Activated naive CD4-positive, alpha-beta T cell treated with anti-CD3 and anti-CD28 coated beads for 36 hours (primary cell): ENCODE measurements at regions of chr11 and their contacts with region 1.

Region 1: DNA sequence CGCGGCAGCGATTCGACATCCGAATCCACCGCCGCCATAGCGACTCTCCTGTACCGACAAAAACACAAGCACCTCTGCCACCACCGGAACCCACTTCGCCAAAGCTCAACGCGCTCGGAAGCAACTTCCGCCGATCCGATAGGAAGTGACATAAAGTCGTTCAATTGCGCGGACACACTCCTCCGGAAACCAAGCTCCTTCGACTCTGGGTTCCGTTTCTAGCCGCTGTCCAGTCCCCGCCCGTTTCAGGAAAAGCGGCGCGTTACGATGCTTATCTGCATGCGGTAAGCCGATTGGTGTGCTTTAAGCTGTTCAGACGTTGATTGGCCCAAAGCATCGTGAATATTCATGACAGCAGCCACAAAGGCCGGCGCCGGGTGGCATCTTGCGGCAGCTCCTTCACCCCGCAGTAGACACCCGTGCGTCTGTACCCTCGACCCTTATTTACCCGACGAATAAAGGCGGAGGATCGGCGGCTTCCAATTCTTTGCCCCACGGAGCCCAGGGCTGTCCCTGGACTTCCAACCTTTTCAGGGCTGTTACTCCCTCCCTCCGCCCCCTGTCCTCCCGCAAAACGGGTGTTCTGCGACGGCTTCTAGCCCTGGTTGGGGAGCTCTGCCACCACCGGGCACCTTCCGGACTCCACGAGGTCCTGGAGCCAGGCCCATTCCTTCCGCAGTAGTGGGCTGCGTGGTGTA is at the start of gene TUT1:
- DNase-seq: peak; percentile 98
- H3K4me3 Mint-ChIP-seq: peak within 1 kb of the TSS; percentile 94
- H3K27ac Mint-ChIP-seq: peak within 1 kb of the TSS; percentile 94
- H3K4me1 Mint-ChIP-seq: peaks cover 55% of the 10 kb centered on the region
- H3K27me3 Mint-ChIP-seq: no peaks in the 10 kb centered on the region
- total RNA-seq, gene TUT1: 38.2 to 42.0 TPM

Region 2: DNA sequence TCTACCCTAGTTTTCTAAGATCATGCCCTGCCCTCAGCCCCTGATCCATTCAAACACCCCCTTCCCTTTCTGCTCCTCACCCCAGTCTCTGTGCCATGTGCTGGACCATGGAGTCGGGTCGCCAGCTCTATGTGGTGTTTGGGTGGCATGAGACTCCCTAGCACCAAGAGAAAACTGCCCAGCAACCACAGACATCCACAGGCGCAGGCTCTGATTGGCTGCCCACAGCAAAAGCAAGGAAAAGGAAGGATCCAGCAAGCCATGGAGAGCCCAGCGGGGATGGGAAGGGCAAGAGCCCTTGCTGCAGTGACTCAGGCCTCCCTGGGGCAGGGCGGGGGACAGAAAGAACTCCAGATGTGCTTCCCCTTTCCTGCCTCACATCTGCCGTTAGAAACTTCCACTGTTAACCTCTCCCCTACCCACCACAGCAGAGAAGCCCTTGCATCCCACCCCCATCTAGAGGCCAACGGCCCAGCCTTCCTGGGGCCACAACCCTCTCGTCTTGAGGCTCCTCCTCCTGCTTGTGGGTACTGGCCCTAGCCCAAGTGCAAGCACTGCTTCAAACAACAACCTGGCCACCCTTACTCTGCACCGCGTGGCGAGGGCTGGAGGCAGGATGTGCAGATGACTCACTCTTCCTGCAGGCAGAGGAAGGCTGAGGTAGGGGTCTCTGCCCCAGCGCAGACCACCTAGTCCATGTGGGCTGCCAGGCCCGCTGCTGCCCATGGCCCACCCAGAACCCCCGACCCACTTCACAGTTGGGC is 35.3 kb before region 1 on chr11:
- CTCF ChIA-PET with region 1: interaction called, 9 read pairs
- intact Hi-C with region 1: loop called (anchors 1 kb)
- DNase-seq: peak; percentile 93
- H3K4me3 Mint-ChIP-seq: peak overlapping the region; percentile 41
- H3K27ac Mint-ChIP-seq: peak overlapping the region; percentile 96
- H3K4me1 Mint-ChIP-seq: peaks cover 95% of the 10 kb centered on the region
- H3K27me3 Mint-ChIP-seq: no peaks in the 10 kb centered on the region

Region 3: DNA sequence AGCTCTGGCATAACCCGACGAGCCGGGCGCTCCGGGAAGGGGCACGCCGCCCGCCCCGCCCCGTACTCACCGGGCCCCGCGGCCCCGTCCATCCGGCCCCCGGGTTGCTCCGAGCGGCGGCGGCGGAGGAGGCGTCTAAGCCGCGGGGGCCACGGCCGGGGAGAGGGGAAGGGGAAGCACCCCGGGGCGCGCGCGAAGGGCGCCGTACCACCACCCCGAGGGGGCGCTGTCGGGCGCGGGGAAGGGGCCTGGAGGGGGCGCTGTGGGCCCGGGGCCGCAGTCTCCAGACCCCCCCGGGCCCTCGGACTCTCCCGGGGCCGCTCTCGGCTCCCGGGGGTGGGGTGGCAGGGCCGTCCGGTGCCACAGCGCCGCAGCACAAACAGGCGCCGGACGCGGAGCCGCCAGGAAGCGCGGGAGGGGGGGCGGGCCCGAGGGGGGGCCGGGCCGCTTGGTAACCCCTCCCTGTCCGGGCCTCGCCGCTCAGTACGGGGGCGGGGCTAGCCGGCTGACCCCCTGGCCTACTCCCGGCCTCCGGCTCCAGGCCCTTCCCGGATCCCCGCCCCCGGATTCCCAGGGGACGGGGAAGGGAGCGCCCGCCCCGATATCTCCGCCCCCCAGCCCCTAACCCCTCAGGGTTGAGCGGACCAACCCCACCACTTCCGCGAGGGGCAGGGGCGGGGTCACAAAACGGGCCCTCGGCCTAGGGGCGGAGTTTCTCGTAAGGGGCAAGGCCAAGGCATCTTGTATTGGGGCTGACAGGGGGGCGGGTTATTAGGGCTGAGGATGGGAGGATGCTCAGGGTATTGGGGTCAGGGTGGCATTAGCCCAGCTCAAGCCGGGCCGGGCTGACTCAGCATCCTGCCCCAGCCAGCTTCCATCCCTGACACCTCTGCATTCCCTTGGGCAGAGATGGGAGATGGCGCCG is 21.0 kb after region 1 on chr11 and contains the starts of genes EML3 and ROM1:
- CTCF ChIA-PET with region 1: interaction called, 28 read pairs
- intact Hi-C with region 1: no loop called
- DNase-seq: peak; percentile 84
- H3K4me3 Mint-ChIP-seq: peak within 1 kb of the TSS; percentile 99
- H3K27ac Mint-ChIP-seq: peak within 1 kb of the TSS; percentile 98
- H3K4me1 Mint-ChIP-seq: peaks cover 54% of the 10 kb centered on the region
- H3K27me3 Mint-ChIP-seq: no peaks in the 10 kb centered on the region
- total RNA-seq, gene EML3: 81.8 to 97.1 TPM
- total RNA-seq, gene ROM1: 0.52 to 1.0 TPM

Region 4: DNA sequence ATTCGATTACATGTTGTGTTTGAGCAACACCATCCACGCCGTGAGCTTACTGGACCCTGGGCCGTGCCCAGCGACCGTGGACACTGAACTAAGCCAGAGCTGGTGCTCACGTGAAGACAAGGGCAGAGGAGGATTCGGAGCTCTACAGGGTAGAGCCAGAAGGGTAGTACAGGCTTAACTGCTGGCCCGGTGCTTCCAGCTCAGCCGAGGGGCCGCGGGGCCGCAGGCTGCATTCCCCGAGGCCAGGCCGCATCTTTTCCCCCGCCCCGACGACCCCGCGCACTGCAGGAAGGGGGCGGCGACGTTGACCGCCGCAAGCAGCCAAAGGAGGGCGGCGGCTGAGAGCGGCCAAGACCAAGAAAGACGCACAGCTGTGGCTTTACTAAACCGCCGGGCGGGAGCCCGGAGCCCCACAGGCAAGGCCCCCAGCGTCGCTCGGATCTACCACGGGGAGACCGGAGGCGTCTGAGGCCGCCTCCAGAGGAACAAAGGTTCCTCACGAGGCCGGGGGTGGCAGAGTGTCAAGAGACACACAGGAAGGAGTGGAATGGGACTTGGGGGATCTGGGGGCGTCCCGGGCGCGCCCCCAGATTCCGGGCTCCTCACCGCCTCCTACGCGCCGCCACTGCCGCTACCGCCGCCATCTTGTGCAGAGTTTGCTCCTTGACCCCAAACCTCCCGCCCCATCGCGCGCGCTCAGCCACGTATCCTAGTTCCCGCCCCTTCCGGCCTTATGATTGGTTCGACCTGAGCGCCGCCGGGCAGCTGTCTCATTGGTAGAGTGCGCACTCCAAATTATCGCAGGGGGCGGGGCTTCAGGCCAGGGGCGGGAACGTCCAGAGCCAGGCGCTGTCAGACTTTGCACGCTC is 54.6 kb after region 1 on chr11 and contains the start of gene GANAB:
- CTCF ChIA-PET with region 1: interaction called, 3 read pairs
- intact Hi-C with region 1: loop called (anchors 1 kb)
- DNase-seq: peak; percentile 100
- H3K4me3 Mint-ChIP-seq: peak within 1 kb of the TSS; percentile 99
- H3K27ac Mint-ChIP-seq: peak within 1 kb of the TSS; percentile 95
- H3K4me1 Mint-ChIP-seq: peaks cover 35% of the 10 kb centered on the region
- H3K27me3 Mint-ChIP-seq: no peaks in the 10 kb centered on the region
- total RNA-seq, gene GANAB: 221 to 230 TPM

Region 5: DNA sequence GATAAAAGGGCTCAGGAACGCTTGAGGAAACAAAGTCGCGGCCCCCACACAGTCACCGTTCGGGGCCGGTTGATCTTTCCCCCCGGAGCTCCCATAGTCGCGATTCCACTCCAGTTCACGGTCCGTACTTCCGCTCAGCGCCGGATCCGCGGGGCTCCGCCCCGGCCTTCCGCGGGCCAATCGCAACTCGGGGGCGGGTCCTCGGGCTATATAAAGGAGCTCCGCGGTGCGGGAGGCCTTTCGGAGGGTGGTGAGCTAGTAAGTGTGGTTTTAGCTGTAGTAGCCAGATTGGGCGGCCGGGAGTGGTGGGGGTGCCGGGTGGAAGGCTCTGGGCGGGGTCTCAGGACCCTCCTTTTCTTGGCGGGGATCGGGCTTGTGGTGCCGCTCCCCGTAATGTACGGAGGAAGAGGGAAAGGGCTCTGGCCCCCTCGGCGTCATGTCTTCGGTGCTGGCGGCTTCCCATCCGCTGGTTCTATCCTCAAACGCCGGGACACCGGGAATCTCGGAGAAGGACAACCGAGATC is 73.5 kb after region 1 on chr11 and contains the starts of genes C11orf98 and CSKMT:
- CTCF ChIA-PET with region 1: interaction called, 10 read pairs
- intact Hi-C with region 1: loop called (anchors 1 kb)
- DNase-seq: peak; percentile 96
- H3K4me3 Mint-ChIP-seq: peak within 1 kb of the TSS; percentile 98
- H3K27ac Mint-ChIP-seq: peak within 1 kb of the TSS; percentile 88
- H3K4me1 Mint-ChIP-seq: peaks cover 42% of the 10 kb centered on the region
- H3K27me3 Mint-ChIP-seq: no peaks in the 10 kb centered on the region
- total RNA-seq, gene C11orf98: 73.5 to 76.5 TPM
- total RNA-seq, gene CSKMT: 35.2 to 44.0 TPM

Region 6: DNA sequence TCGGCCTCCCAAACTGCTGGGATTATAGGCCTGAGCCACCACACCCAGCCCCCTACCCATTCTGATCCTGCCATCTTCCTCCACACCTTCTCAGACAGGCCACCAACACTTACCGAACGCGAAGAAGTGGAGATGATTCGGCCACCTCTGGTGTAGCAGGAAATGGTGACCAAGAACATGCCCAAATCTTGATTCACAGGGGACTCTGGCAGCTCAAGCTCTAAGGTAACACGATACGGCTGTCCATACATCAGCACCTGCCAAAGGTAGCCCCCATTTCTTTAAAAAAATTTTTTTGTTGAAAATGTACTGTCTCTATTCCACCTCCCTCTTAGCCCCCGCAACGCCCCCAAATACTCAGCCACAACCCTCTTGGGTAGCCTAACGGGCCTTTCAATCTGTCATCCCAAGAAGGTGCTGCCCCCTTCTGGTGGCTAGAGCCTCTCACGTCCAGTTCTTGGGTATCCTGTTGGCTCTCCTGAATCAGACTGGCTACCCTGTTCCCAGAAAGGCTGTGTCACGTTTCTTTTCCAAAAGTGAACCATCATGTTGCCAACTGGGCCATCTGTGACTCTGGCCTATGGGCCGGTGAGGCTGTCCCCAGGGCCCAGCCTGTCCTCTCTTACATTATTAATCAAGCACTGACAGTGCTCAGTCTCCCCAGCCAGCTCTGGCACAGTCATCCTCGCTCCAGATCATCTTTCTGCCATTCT is 103.0 kb after region 1 on chr11:
- CTCF ChIA-PET with region 1: interaction called, 18 read pairs
- intact Hi-C with region 1: loop called (anchors 1 kb)
- DNase-seq: peak; percentile 85
- H3K4me3 Mint-ChIP-seq: no peak overlapping the region
- H3K27ac Mint-ChIP-seq: peak overlapping the region; percentile 4
- H3K4me1 Mint-ChIP-seq: no peaks in the 10 kb centered on the region
- H3K27me3 Mint-ChIP-seq: no peaks in the 10 kb centered on the region

Region 7: GRCh38 chr11:62771144-62772021 is 179.8 kb after region 1 on chr11 and contains the start of gene TAF6L:
- CTCF ChIA-PET with region 1: no interaction called
- intact Hi-C with region 1: loop called (anchors 2 kb)
- DNase-seq: peak; percentile 95
- H3K4me3 Mint-ChIP-seq: peak within 1 kb of the TSS; percentile 80
- H3K27ac Mint-ChIP-seq: peak within 1 kb of the TSS; percentile 91
- H3K4me1 Mint-ChIP-seq: peaks cover 25% of the 10 kb centered on the region
- H3K27me3 Mint-ChIP-seq: no peaks in the 10 kb centered on the region
- total RNA-seq, gene TAF6L: 8.9 to 10.5 TPM